Activated CD4-positive, alpha-beta T cell treated with anti-CD3 and anti-CD28 coated beads, Interleukin-2, amount 10 ng/mL, durations not matched to agents 24 days and 14 days (primary cell): ENCODE measurements at regions of chr1 and their contacts with region 1.

Region 1: DNA sequence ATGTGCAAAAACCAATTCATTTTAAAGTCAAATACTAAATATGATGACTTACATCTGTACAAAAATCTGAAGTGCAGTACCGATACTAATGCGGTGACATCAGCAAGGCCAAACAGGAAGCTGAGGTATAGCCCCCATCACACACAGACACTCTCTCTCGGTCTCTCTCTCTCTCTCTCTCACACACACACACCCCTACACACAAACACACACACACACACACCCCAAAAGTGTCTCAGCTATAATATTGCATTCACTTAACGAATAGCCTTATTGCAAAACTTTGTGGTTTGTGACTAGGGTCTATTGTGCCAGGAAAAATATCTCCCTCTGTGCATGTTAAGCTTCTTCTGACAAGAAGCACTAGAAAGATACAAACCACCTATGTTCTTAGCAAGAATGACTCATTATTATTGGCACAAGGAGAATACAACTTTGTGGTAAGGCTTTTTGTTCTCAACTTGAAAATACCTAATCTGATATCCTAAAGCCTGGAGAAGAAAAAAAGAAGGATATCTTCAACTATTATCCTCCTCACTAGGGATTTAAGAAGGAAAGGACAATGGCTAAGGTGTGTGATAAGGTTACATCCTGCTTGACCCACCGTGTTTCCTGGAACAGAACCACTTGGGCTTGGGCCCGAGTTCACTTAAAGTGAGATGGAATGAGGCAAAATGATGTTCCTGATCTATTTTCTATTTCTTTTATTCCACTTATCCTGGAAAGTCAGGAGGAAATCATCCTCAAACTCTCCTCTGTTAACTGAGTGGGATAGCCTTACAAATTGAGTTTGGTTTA is 107.1 kb downstream of the NIBAN1 start:
- DNase-seq: peak; percentile 83
- H3K4me3 Mint-ChIP-seq: peak overlapping the region; percentile 47
- H3K27ac Mint-ChIP-seq: peak overlapping the region; percentile 89
- H3K4me1 Mint-ChIP-seq: peaks cover 40% of the 10 kb centered on the region
- H3K27me3 Mint-ChIP-seq: no peaks in the 10 kb centered on the region

Region 2: GRCh38 chr1:184163674-184164465 is 703.3 kb before region 1 on chr1:
- intact Hi-C with region 1: loop called (anchors 5 kb)
- DNase-seq: peak; percentile 61
- H3K4me3 Mint-ChIP-seq: no peak overlapping the region
- H3K27ac Mint-ChIP-seq: no peak overlapping the region
- H3K4me1 Mint-ChIP-seq: peaks cover 16% of the 10 kb centered on the region
- H3K27me3 Mint-ChIP-seq: peaks cover 2% of the 10 kb centered on the region

Region 3: GRCh38 chr1:184805667-184806295 is 61.4 kb before region 1 on chr1:
- intact Hi-C with region 1: loop called (anchors 5 kb)
- DNase-seq: peak; percentile 94
- H3K4me3 Mint-ChIP-seq: no peak overlapping the region
- H3K27ac Mint-ChIP-seq: no peak overlapping the region
- H3K4me1 Mint-ChIP-seq: peaks cover 3% of the 10 kb centered on the region
- H3K27me3 Mint-ChIP-seq: no peaks in the 10 kb centered on the region

Region 4: GRCh38 chr1:184843732-184844495 is 23.3 kb before region 1 on chr1:
- intact Hi-C with region 1: no loop called
- DNase-seq: peak; percentile 82
- H3K4me3 Mint-ChIP-seq: no peak overlapping the region
- H3K27ac Mint-ChIP-seq: no peak overlapping the region
- H3K4me1 Mint-ChIP-seq: peaks cover 22% of the 10 kb centered on the region
- H3K27me3 Mint-ChIP-seq: no peaks in the 10 kb centered on the region

Region 5: GRCh38 chr1:184881941-184882913 is 15.0 kb after region 1 on chr1:
- intact Hi-C with region 1: loop called (anchors 1 kb)
- DNase-seq: no peak
- H3K4me3 Mint-ChIP-seq: peak overlapping the region; percentile 32
- H3K27ac Mint-ChIP-seq: peak overlapping the region; percentile 90
- H3K4me1 Mint-ChIP-seq: peaks cover 22% of the 10 kb centered on the region
- H3K27me3 Mint-ChIP-seq: no peaks in the 10 kb centered on the region

Region 6: GRCh38 chr1:184953600-184954219 is 86.5 kb after region 1 on chr1:
- intact Hi-C with region 1: loop called (anchors 1 kb)
- DNase-seq: no peak
- H3K4me3 Mint-ChIP-seq: peak overlapping the region; percentile 52
- H3K27ac Mint-ChIP-seq: peak overlapping the region; percentile 69
- H3K4me1 Mint-ChIP-seq: peaks cover 16% of the 10 kb centered on the region
- H3K27me3 Mint-ChIP-seq: no peaks in the 10 kb centered on the region

Region 7: GRCh38 chr1:185044981-185045813 is 178.0 kb after region 1 on chr1 and contains the start of gene RNF2:
- intact Hi-C with region 1: loop called (anchors 2 kb)
- DNase-seq: peak; percentile 91
- H3K4me3 Mint-ChIP-seq: peak within 1 kb of the TSS; percentile 93
- H3K27ac Mint-ChIP-seq: peak within 1 kb of the TSS; percentile 91
- H3K4me1 Mint-ChIP-seq: peaks cover 26% of the 10 kb centered on the region
- H3K27me3 Mint-ChIP-seq: peaks cover 18% of the 10 kb centered on the region
- total RNA-seq, gene RNF2: 17.8 and 21.1 TPM in 2 replicates